Endothelial cell of umbilical vein (primary cell): ENCODE measurements at regions of chr19 and their contacts with region 1.

Region 1: GRCh38 chr19:50537762-50538230 is 24.1 kb upstream of the ASPDH start:
- DNase-seq: peak; percentile 83
- H3K4me3 ChIP-seq: no peak overlapping the region
- H3K27ac ChIP-seq: no peak overlapping the region
- H3K4me1 ChIP-seq: no peaks in the 10 kb centered on the region
- H3K27me3 ChIP-seq: peaks cover 0 to 2% of the 10 kb centered on the region in 2 experiments
- CTCF ChIP-seq: peak; percentile 93 to 97
- POLR2A ChIP-seq: no peak

Region 2: DNA sequence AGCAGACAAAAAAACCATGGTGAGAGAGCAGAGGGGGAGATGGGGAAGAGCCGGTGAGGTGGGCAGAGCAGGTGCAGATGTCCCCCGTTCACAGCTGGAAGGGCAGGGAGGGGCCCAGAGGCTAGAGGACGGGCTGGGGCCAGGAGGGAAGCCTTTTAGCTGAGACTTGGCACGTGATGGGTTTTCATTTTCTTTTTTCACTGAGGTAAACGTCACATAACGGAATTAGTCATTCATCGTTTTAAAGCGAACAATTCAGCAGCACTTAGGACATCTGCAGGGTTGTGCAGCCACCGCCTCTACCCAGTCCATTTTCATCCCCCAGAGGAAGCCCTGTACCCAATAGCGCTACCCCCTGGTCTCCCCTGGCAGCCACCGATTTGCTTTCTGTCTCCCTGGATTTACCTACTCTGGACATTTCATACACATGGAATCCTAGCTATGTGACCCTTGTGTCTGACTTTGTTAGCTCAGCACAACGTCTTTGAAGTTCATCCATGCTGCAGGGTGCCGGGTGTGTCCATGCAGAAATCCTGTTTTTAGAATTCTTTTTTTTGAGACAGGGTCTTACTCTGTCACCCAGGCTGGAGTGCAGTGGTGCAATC is 77.5 kb before region 1 on chr19:
- CTCF ChIA-PET with region 1: no interaction called
- POLR2A ChIA-PET with region 1: no interaction called
- dilution Hi-C with region 1: no loop called
- intact Hi-C with region 1: no loop called
- DNase-seq: no peak
- H3K4me3 ChIP-seq: no peak overlapping the region
- H3K27ac ChIP-seq: no peak overlapping the region
- H3K4me1 ChIP-seq: no peaks in the 10 kb centered on the region
- H3K27me3 ChIP-seq: no peaks in the 10 kb centered on the region
- CTCF ChIP-seq: no peak
- POLR2A ChIP-seq: no peak

Region 3: DNA sequence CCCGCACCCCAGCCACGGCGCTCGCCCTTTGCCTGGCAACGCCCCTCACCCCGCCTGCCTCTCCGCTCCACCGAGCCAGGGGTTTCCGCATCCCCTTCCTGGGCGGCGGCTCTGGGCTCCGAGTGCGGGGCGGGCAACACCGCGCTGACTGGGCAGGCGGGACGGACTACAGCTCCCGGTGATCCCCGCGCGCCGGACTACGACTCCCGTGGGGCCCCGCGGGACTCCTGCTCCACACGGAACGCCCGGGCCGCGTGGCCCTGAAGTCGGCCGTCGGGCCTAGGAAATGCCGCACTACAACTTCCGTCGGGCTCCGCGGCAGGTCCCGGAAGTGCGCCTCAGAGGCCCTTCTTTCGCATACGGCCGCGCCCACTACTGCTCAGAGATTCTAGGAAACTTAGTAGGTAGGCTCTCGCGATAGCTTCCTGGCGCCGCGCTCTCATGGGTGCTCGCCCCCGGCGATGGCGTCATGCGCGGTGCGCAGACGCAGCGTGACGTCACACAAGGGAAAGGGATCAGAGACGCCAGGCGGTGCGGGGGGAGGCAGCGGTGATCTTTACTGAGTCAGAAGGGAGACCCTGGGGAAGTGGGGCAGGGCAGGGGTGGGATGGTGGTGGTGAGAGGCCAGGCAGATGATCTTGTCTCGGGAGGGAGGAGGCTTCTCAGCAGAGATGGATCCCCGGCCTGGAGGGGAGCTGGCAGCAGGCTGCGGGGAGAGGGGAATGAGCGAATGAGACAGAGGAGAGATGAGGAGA is 26.6 kb before region 1 on chr19 and contains the start of gene JOSD2:
- CTCF ChIA-PET with region 1: interaction called, 10 read pairs
- POLR2A ChIA-PET with region 1: no interaction called
- dilution Hi-C with region 1: no loop called
- intact Hi-C with region 1: no loop called
- DNase-seq: peak; percentile 99
- H3K4me3 ChIP-seq: peak within 1 kb of the TSS; percentile 56 to 76 (median 75)
- H3K27ac ChIP-seq: peak within 1 kb of the TSS; percentile 39
- H3K4me1 ChIP-seq: peaks cover 7% of the 10 kb centered on the region
- H3K27me3 ChIP-seq: no peaks in the 10 kb centered on the region
- CTCF ChIP-seq: no peak
- POLR2A ChIP-seq: peak; percentile 56
- total RNA-seq, gene JOSD2: 33.8 and 37.4 TPM in 2 replicates

Region 4: GRCh38 chr19:50556282-50557008 is 18.6 kb after region 1 on chr19:
- CTCF ChIA-PET with region 1: interaction called, 136 read pairs
- POLR2A ChIA-PET with region 1: no interaction called
- dilution Hi-C with region 1: no loop called
- intact Hi-C with region 1: loop called (anchors 1 kb)
- DNase-seq: peak; percentile 67
- H3K4me3 ChIP-seq: peak overlapping the region; percentile 35 to 69 (median 43)
- H3K27ac ChIP-seq: no peak overlapping the region
- H3K4me1 ChIP-seq: peaks cover 3% of the 10 kb centered on the region
- H3K27me3 ChIP-seq: peaks cover 3% of the 10 kb centered on the region in 2 experiments
- CTCF ChIP-seq: peak; percentile 93 to 94
- POLR2A ChIP-seq: no peak

Region 5: GRCh38 chr19:50657712-50658440 is 120.1 kb after region 1 on chr19:
- CTCF ChIA-PET with region 1: interaction called, 4 read pairs
- POLR2A ChIA-PET with region 1: no interaction called
- dilution Hi-C with region 1: no loop called
- intact Hi-C with region 1: loop called (anchors 2 kb)
- DNase-seq: peak; percentile 98
- H3K4me3 ChIP-seq: peak overlapping the region in 2 of 3 experiments; percentile 2 to 26
- H3K27ac ChIP-seq: peak overlapping the region; percentile 71
- H3K4me1 ChIP-seq: peaks cover 11% of the 10 kb centered on the region
- H3K27me3 ChIP-seq: peaks cover 0 to 2% of the 10 kb centered on the region in 2 experiments
- CTCF ChIP-seq: no peak
- POLR2A ChIP-seq: no peak

Region 6: GRCh38 chr19:50705422-50706019 is 167.7 kb after region 1 on chr19:
- CTCF ChIA-PET with region 1: interaction called, 10 read pairs
- POLR2A ChIA-PET with region 1: no interaction called
- dilution Hi-C with region 1: no loop called
- intact Hi-C with region 1: loop called (anchors 1 kb)
- DNase-seq: peak; percentile 62
- H3K4me3 ChIP-seq: no peak overlapping the region
- H3K27ac ChIP-seq: no peak overlapping the region
- H3K4me1 ChIP-seq: peaks cover 18% of the 10 kb centered on the region
- H3K27me3 ChIP-seq: no peaks in the 10 kb centered on the region
- CTCF ChIP-seq: peak; percentile 72 to 81
- POLR2A ChIP-seq: no peak